Heart right ventricle (tissue), 16 donors: ENCODE measurements at regions of chr18 and their contacts with region 1.

Region 1: GRCh38 chr18:23837591-23837990 is 148.3 kb downstream of the LAMA3 start:
- DNase-seq: no peak
- ATAC-seq: peak in 6 of 8 donors; percentile 47 to 81 (median 73)
- H3K4me3 ChIP-seq: no peak overlapping the region
- H3K27ac ChIP-seq: peak overlapping the region in 8 of 10 donors; percentile 16 to 68 (median 35)
- H3K4me1 ChIP-seq: peaks cover 0 to 27% (median 16%) of the 10 kb centered on the region in 9 donors
- H3K27me3 ChIP-seq: no peaks in the 10 kb centered on the region
- CTCF ChIP-seq: no peak

Region 2: DNA sequence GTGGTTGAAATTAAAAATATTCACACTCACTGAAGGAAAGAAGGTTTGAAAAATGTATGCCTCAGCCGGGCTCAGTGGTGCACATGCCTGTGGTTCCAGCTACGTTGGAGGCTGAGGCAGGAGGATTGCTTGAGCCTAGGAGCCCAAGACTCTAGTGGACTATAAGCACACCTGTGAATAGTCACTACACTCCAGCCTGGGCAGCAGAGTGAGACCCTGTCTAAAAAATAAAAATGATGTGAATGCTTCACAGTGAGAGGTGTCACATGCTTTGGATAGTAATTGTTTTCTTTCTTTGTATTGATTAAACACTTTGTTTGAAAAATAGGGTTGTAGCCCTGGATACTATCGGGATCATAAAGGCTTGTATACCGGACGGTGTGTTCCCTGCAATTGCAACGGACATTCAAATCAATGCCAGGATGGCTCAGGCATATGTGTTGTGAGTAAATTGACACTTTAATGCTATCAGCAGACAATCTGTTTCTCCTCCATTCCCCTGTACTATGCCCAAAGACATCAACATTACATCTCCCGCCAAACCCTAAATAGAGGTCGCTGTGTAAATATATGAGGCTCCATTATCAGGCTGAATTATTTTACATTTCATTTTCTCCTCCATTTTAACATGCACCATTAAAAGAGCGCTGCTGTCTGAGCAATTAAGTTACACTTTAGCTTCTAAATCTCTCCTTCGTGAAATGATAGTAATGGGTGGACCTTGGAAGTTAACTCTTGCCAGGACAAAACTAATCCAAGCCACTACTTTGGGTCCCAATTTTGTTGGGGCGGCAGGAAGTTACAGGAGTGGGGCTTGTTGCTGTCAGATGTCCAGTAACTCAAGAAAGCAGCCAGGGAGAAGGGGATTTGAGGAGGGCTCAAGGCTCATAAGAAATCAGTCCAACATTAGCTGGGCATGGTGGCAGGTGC is 38.6 kb after region 1 on chr18:
- intact Hi-C with region 1: loop called in 1 of 10 experiments (anchors 5 kb)
- DNase-seq: no peak
- ATAC-seq: no peak
- H3K4me3 ChIP-seq: no peak overlapping the region
- H3K27ac ChIP-seq: no peak overlapping the region
- H3K4me1 ChIP-seq: peaks cover 0 to 17% (median 8%) of the 10 kb centered on the region in 9 donors
- H3K27me3 ChIP-seq: no peaks in the 10 kb centered on the region
- CTCF ChIP-seq: no peak